CD4-positive, alpha-beta memory T cell (primary cell): ENCODE measurements at regions of chr15 and their contacts with region 1.

Region 1: DNA sequence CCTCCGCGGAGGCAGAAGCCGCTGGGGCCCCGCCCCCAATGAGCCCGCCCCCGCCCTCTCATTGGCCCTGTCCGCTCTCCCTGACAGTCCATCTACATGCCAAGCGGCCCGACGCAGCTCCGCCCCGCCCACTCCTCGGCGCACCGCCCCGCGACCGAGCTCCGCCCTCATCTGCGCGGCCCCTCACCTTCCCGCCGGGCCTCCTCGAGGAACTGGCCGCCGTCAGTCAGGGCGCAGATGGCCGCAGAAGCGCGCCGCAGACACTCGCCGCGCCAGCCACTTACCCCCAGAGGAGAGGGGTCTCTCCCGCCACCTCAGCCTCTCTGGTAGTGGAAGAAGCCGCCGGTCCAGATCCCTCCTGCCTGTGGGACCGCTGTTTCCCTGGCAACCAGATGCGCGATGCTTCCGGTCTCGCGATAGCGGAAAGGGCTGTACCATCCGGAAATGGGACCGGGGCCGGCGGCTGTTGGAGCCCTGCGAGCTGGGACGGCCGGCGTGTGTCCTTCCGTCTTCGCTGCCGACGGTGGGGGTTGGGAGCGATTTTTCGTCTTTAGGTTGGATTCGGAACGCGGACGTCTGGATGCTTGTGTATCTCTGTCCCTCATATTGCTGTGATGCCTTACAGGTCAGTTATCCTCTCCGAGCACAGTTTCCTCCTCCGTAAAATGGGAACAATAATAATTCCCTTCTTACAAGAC is at the start of gene FSIP1:
- DNase-seq: peak; percentile 96 to 99 (median 97)
- H3K4me3 ChIP-seq: peak within 1 kb of the TSS; percentile 97 to 100
- H3K4me3 Mint-ChIP-seq: peak within 1 kb of the TSS; percentile 88 to 98 (median 96)
- H3K27ac ChIP-seq: peak within 1 kb of the TSS; percentile 60
- H3K27ac Mint-ChIP-seq: peak within 1 kb of the TSS; percentile 83 to 97 (median 93)
- H3K4me1 ChIP-seq: peaks cover 38% of the 10 kb centered on the region
- H3K4me1 Mint-ChIP-seq: peaks cover 28 to 55% (median 44%) of the 10 kb centered on the region in 4 donors
- H3K27me3 ChIP-seq: no peaks in the 10 kb centered on the region
- H3K27me3 Mint-ChIP-seq: no peaks in the 10 kb centered on the region
- total RNA-seq, gene FSIP1: 0.47 to 1.1 TPM

Region 2: GRCh38 chr15:38453971-38454695 is 1328.5 kb before region 1 on chr15 and contains the start of gene FAM98B:
- CTCF ChIA-PET with region 1: no interaction called
- POLR2A ChIA-PET with region 1: interaction called, 6 read pairs
- intact Hi-C with region 1: loop called (anchors 10 kb)
- DNase-seq: peak; percentile 80 to 88 (median 84)
- H3K4me3 ChIP-seq: peak within 1 kb of the TSS; percentile 88 to 95
- H3K4me3 Mint-ChIP-seq: peak within 1 kb of the TSS; percentile 95 to 99 (median 97)
- H3K27ac ChIP-seq: peak within 1 kb of the TSS; percentile 74
- H3K27ac Mint-ChIP-seq: peak within 1 kb of the TSS; percentile 94 to 98 (median 96)
- H3K4me1 ChIP-seq: peaks cover 23% of the 10 kb centered on the region
- H3K4me1 Mint-ChIP-seq: peaks cover 26 to 39% (median 32%) of the 10 kb centered on the region in 4 donors
- H3K27me3 ChIP-seq: no peaks in the 10 kb centered on the region
- H3K27me3 Mint-ChIP-seq: no peaks in the 10 kb centered on the region
- total RNA-seq, gene FAM98B: 22.0 to 26.3 TPM

Region 3: DNA sequence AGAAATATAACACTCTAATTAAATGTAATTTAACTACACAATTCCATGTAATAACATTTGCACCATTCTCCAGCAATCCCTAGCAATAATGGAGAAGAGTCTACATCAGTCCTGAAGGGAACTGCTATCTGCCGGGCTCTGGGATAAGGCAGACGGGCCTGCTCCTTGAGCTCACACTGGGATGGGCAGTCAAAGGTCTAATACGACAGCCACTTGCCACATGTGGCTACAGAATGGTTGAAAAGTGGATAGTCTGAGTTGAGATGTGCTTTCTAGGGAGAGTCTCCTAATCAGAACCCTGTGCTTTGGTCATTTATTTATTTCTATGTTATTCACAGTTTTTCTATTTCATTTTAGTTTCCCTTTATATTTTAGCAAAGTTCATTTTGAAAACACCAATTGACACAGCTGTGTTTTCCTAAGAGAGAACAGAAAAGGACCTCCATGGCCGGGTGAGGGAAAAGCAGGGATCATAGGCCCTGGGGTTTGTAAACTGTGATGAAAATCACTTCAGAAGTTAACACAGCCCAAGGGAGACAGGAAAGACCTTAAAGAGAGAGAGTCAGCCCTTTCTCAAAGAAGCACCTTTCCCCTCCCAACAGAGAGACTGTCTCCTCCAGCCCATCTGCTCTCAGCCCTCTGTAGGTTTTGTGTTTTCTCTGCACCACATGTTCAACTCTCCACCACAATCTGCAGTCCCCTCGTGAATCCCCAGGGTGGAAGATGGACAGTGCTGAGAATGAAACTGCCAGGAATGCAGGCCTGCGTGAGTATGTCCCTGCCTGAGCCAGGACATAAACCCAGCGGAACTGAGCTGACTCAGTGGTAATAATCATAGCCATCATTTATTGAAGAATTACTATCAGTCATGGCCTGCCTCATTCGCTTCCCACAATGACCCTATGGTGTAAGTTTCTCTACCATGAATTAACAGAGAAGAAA is 11.6 kb before region 1 on chr15:
- CTCF ChIA-PET with region 1: interaction called, 6 read pairs
- POLR2A ChIA-PET with region 1: interaction called, 20 read pairs
- intact Hi-C with region 1: no loop called
- DNase-seq: no peak
- H3K4me3 ChIP-seq: no peak overlapping the region
- H3K4me3 Mint-ChIP-seq: no peak overlapping the region
- H3K27ac ChIP-seq: no peak overlapping the region
- H3K27ac Mint-ChIP-seq: peak overlapping the region in 2 of 7 donors; percentile 62 to 84
- H3K4me1 ChIP-seq: peaks cover 15% of the 10 kb centered on the region
- H3K4me1 Mint-ChIP-seq: peaks cover 9 to 24% (median 14%) of the 10 kb centered on the region in 4 donors
- H3K27me3 ChIP-seq: no peaks in the 10 kb centered on the region
- H3K27me3 Mint-ChIP-seq: peaks cover 0 to 1% of the 10 kb centered on the region in 2 donors

Region 4: GRCh38 chr15:39934397-39935071 is 151.9 kb after region 1 on chr15:
- CTCF ChIA-PET with region 1: interaction called, 5 read pairs
- POLR2A ChIA-PET with region 1: interaction called, 4 read pairs
- intact Hi-C with region 1: loop called (anchors 5 kb)
- DNase-seq: peak in 1 of 5 donors; percentile 5
- H3K4me3 ChIP-seq: peak overlapping the region; percentile 66 to 74
- H3K4me3 Mint-ChIP-seq: peak overlapping the region; percentile 88 to 99 (median 93)
- H3K27ac ChIP-seq: peak overlapping the region; percentile 36
- H3K27ac Mint-ChIP-seq: peak overlapping the region; percentile 10 to 92 (median 80)
- H3K4me1 ChIP-seq: peaks cover 17% of the 10 kb centered on the region
- H3K4me1 Mint-ChIP-seq: peaks cover 22 to 38% (median 25%) of the 10 kb centered on the region in 4 donors
- H3K27me3 ChIP-seq: no peaks in the 10 kb centered on the region
- H3K27me3 Mint-ChIP-seq: peaks cover 0 to 3% of the 10 kb centered on the region in 2 donors

Region 5: DNA sequence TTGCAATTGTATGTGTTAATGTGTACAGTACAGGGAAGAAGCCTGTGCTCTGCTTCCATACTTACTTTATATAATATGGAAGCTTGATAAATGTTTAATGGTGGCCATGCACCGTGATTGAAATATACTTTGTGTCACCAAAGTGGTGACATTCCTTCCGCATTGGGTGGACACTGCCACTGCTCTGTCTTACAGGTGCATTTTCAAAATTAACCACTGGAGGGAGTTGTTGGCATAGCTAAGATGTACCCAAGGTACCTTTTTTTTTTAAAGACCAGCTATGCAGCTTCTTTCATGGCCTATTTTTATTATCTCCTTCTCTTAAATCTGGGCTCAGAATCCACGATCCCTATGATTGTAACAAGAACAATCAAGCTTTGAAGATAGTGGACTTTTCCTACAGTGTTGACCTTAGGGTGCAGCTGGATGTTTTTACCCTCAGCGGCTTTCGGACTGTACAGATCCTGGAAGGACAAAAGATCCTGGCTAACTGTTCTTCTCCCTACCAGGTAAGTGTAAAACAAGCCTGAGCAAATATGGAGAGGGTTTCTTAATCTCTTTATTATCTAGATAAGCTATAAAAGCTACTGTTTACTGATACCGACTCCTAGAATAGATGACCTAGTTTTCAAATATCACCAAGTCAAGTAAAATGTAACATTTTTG is 434.7 kb after region 1 on chr15:
- CTCF ChIA-PET with region 1: no interaction called
- POLR2A ChIA-PET with region 1: no interaction called
- intact Hi-C with region 1: loop called (anchors 5 kb)
- DNase-seq: peak; percentile 56 to 74 (median 69)
- H3K4me3 ChIP-seq: no peak overlapping the region
- H3K4me3 Mint-ChIP-seq: no peak overlapping the region
- H3K27ac ChIP-seq: no peak overlapping the region
- H3K27ac Mint-ChIP-seq: no peak overlapping the region
- H3K4me1 ChIP-seq: no peaks in the 10 kb centered on the region
- H3K4me1 Mint-ChIP-seq: no peaks in the 10 kb centered on the region
- H3K27me3 ChIP-seq: no peaks in the 10 kb centered on the region
- H3K27me3 Mint-ChIP-seq: no peaks in the 10 kb centered on the region